Left ventricle myocardium superior (tissue), 1 donor: ENCODE measurements at regions of chr17 and their contacts with region 1.

Region 1: GRCh38 chr17:31013844-31014243 is 43.0 kb downstream of the RNF135 start:
- DNase-seq: no peak
- ATAC-seq: no peak

Region 2: GRCh38 chr17:30805944-30806456 is 207.8 kb before region 1 on chr17:
- intact Hi-C with region 1: no loop called
- DNase-seq: no peak
- ATAC-seq: no peak

Region 3: GRCh38 chr17:31074772-31075555 is 61.1 kb after region 1 on chr17:
- intact Hi-C with region 1: no loop called
- DNase-seq: no peak
- ATAC-seq: no peak

Region 4: DNA sequence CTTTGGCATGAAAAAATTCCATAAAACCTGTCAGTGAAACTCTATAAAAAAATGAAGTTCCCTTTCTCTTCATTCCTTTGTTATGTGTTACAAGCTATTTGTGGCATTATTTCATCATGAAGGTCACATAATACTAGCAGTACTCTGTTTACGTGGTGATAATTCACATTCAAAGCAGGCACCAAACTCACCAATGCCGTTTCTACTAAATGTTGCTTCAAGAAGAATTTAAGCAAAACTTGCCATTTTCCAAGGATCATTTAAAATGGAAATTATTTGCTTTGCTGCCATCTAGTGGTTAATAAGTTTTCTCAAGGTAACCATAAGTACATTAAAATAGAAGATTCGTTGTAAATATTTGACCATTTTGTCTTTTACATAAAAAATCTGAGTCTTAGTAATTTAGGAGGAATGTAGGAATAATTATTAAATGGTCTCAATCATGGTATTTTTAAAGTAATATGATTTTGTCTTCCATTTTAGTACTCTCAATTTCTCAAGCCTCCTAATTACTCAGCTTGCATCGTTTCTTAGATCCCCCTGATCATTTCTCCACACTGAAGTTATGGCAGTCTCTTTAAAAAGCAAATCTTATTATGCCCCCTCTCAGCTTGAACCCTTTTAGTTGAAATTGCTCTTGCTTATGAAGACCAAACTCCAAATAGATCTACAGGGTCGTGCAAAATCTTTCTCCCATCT is 202.4 kb after region 1 on chr17:
- intact Hi-C with region 1: loop called (anchors 5 kb)
- DNase-seq: no peak
- ATAC-seq: no peak